ENCODE measurements at regions of chr16 and their contacts with region 1.

Region 1: GRCh38 chr16:81444448-81445121 is at the start of gene CMIP:
- DNase-seq: peak; percentile 95
- total RNA-seq, gene CMIP: 38.2 to 45.2 TPM

Region 2: GRCh38 chr16:81616321-81617055 is 171.9 kb after region 1 on chr16:
- intact Hi-C with region 1: loop called in 1 of 2 experiments (anchors 10 kb)
- DNase-seq: no peak

Region 3: GRCh38 chr16:82987767-82988166 is 1543.2 kb after region 1 on chr16:
- intact Hi-C with region 1: loop called in 1 of 2 experiments (anchors 5 kb)
- DNase-seq: no peak